ENCODE measurements at regions of chr2 and their contacts with region 1.

Region 1: GRCh38 chr2:190781604-190782198 is 98.9 kb upstream of the GLS start:
- DNase-seq: peak in 1 of 2 experiments; percentile 34
- H3K4me3 ChIP-seq: no peak overlapping the region
- H3K27ac ChIP-seq: no peak overlapping the region
- H3K4me1 ChIP-seq: peaks cover 16% of the 10 kb centered on the region
- H3K27me3 ChIP-seq: no peaks in the 10 kb centered on the region
- CTCF ChIP-seq: peak; percentile 71

Region 2: DNA sequence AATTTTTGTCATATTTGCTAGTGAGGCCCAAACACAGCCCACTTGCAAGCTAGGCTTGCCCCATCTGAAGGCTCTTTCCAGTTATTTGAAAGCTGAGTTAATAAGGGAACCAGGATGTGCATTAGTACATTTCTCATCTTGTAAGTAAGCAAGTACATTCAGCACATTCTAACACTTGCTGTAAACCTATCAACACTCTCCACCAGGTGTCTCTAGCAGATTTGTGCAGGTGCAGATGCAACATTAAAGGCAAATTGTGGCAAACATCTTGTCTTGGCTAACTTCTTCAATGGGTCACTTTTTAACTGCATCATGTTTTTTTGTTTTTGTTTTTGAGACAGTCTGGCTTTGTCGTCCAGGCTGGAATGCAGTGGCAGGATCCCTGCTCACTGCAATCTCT is 398.9 kb before region 1 on chr2:
- CTCF ChIA-PET with region 1: no interaction called
- POLR2A ChIA-PET with region 1: no interaction called
- intact Hi-C with region 1: loop called (anchors 10 kb)
- DNase-seq: peak; percentile 17 to 59
- H3K4me3 ChIP-seq: no peak overlapping the region
- H3K27ac ChIP-seq: no peak overlapping the region
- H3K4me1 ChIP-seq: no peaks in the 10 kb centered on the region
- H3K27me3 ChIP-seq: no peaks in the 10 kb centered on the region
- CTCF ChIP-seq: peak; percentile 63

Region 3: GRCh38 chr2:190804182-190804795 is 22.6 kb after region 1 on chr2:
- CTCF ChIA-PET with region 1: no interaction called
- POLR2A ChIA-PET with region 1: no interaction called
- intact Hi-C with region 1: loop called (anchors 1 kb)
- DNase-seq: no peak
- H3K4me3 ChIP-seq: no peak overlapping the region
- H3K27ac ChIP-seq: no peak overlapping the region
- H3K4me1 ChIP-seq: no peaks in the 10 kb centered on the region
- H3K27me3 ChIP-seq: no peaks in the 10 kb centered on the region
- CTCF ChIP-seq: peak; percentile 71

Region 4: GRCh38 chr2:190880378-190881073 is 98.8 kb after region 1 on chr2 and contains the start of gene GLS:
- CTCF ChIA-PET with region 1: no interaction called
- POLR2A ChIA-PET with region 1: interaction called, 3 read pairs
- intact Hi-C with region 1: loop called (anchors 1 kb)
- DNase-seq: peak; percentile 89
- H3K4me3 ChIP-seq: peak within 1 kb of the TSS; percentile 93
- H3K27ac ChIP-seq: peak within 1 kb of the TSS; percentile 80
- H3K4me1 ChIP-seq: peaks cover 31% of the 10 kb centered on the region
- H3K27me3 ChIP-seq: no peaks in the 10 kb centered on the region
- CTCF ChIP-seq: no peak
- total RNA-seq, gene GLS: 66.4 and 68.5 TPM in 2 replicates

Region 5: DNA sequence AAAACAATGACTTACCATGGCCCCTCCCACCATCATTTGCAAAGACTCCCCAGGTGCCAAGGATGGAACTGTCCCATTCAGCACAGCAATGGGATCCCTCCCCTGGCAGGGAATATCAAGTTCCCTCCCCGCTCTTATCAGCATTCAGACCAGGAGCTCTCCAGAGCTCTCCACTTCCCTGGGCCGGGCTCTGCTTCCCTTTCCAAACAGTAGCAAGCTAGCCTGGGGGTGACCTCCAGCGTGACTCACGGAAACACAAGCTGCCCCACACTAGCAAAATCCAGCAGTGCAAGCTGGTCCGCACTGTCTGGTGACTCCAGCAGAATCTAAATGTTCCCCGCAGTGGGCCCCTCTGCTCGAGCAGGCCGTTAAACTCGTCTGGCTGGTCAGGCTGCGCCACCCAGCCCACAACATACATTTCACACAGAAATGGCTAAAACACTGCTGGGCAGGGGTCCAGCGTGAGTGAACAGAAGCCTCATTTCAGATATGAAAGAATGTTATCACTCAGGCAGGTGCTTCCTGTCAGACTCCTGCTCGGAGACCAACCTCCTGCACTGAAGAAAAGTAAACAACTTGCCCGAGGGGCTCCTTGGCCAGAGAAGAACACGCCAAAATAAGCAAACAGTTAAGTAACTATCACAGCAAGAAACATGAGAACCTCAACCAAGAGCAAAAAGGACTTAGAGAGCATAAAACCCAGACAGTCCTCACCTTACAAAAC is 198.4 kb after region 1 on chr2:
- CTCF ChIA-PET with region 1: no interaction called
- POLR2A ChIA-PET with region 1: interaction called, 3 read pairs
- intact Hi-C with region 1: loop called (anchors 1 kb)
- DNase-seq: peak; percentile 90 to 94
- H3K4me3 ChIP-seq: peak overlapping the region; percentile 28; the same call in 1 of the 2 replicates
- H3K27ac ChIP-seq: peak overlapping the region; percentile 55
- H3K4me1 ChIP-seq: peaks cover 40% of the 10 kb centered on the region
- H3K27me3 ChIP-seq: no peaks in the 10 kb centered on the region
- CTCF ChIP-seq: no peak

Region 6: DNA sequence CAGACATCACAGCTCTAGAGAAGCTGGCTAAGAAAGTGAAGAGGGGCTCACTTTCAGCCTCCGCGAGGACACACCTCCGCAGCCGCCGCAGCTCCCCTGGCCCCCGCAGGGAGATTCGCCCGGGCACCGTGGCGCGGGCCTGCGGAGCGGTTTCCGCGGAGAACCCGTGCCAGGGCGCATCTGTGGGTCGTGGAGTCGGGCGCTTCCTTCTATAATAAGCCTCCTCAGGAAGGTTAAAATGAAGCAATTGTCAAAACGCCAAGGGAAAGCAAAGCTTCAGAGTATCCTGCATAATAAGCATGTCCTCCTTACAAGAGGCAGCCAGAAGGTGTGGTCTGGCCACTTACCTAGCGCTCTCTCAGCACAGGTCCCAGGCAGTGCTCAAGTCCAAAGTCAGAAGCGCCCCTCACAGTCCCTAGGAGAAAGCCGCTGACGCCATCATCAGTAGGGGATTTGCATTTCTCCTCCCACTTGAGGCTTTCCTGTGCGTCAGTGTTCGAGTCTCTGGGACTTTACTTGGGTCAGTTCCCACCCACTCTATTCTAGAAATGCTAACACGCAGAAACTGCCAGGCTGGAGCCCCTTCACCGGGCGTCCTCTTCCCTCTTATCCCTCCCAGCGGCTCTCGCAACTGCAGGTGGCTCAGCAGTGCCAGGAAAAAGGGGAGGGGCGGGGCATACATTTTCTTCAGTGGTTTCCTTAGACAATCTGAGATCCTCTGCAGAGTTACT is 369.1 kb after region 1 on chr2 and contains the start of gene STAT4:
- CTCF ChIA-PET with region 1: no interaction called
- POLR2A ChIA-PET with region 1: no interaction called
- intact Hi-C with region 1: loop called (anchors 2 kb)
- DNase-seq: peak; percentile 28 to 48
- H3K4me3 ChIP-seq: peak within 1 kb of the TSS; percentile 86
- H3K27ac ChIP-seq: no peak within 1 kb of the TSS
- H3K4me1 ChIP-seq: 0 out of 2 replicates have a peak, but pooled peaks cover 4% of the 10 kb centered on the region
- H3K27me3 ChIP-seq: no peaks in the 10 kb centered on the region
- CTCF ChIP-seq: no peak
- total RNA-seq, gene STAT4: 0.23 and 0.70 TPM in 2 replicates

Region 7: DNA sequence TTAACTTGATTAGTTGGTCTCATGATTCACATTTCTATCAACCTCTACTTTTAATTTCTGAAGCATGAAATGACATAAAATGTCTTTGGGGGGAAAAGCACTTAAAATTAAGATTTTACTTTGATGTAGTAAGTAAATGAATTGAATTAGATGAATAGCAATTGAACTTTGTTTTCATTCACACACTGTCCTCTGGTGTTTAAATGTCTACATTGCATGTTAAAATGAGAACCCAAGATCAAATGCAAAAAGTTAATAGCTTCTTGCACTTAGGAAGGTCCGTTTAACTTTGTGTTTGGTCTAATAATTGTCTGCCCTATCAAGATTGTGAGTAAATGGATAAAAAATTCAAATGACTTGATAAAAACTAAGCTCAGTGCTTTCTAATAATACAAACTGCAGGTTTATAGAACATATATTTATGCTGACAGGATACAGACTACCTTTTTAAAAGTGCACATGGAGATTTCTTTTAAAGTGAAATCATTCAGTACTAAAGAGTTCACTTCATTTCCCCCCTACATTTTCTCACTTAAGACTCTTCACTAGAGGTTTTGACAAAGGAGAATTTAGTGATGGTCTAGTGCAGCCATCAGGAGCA is 740.0 kb after region 1 on chr2:
- CTCF ChIA-PET with region 1: no interaction called
- POLR2A ChIA-PET with region 1: no interaction called
- intact Hi-C with region 1: loop called (anchors 5 kb)
- DNase-seq: no peak
- H3K4me3 ChIP-seq: no peak overlapping the region
- H3K27ac ChIP-seq: no peak overlapping the region
- H3K4me1 ChIP-seq: no peaks in the 10 kb centered on the region
- H3K27me3 ChIP-seq: no peaks in the 10 kb centered on the region
- CTCF ChIP-seq: peak; percentile 75

Measured in PC-9 (cell line).